ENCODE measurements at regions of chr7 and their contacts with region 1.

Region 1: GRCh38 chr7:43582503-43583423 is at the start of gene STK17A:
- DNase-seq: peak; percentile 92 to 99 (median 96)
- H3K4me3 ChIP-seq: peak within 1 kb of the TSS; percentile 73 to 97
- H3K4me3 Mint-ChIP-seq: peak within 1 kb of the TSS; percentile 93 to 99 (median 98)
- H3K27ac ChIP-seq: peak within 1 kb of the TSS; percentile 87
- H3K27ac Mint-ChIP-seq: peak within 1 kb of the TSS; percentile 93 to 100 (median 98)
- H3K4me1 ChIP-seq: peaks cover 19% of the 10 kb centered on the region
- H3K4me1 Mint-ChIP-seq: peaks cover 13 to 47% (median 18%) of the 10 kb centered on the region in 4 donors
- H3K27me3 ChIP-seq: no peaks in the 10 kb centered on the region
- H3K27me3 Mint-ChIP-seq: peaks cover 2 to 9% of the 10 kb centered on the region in 2 donors
- total RNA-seq, gene STK17A: 118 to 119 TPM

Region 2: DNA sequence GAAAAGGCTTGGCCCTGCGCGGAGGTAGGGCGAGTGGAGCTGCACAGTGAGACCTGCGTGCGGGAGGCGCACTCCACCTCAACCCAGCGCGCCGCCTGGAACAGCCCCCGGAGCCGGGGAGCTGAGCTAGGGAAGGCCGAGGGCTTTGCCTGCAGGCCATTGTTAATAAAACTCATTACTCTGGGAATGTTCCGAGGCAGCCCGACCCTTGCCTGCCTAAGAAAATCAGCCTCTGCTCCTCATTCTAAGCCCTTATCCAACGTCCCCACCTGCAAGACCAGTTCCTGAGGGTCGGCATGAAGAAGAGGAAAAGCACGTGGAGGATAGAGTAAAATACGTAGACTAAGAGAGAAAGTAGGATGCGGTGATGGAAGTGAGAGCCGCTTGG is 726.2 kb before region 1 on chr7:
- CTCF ChIA-PET with region 1: no interaction called
- POLR2A ChIA-PET with region 1: no interaction called
- intact Hi-C with region 1: no loop called
- DNase-seq: no peak
- H3K4me3 ChIP-seq: no peak overlapping the region
- H3K4me3 Mint-ChIP-seq: peak overlapping the region in 5 of 8 donors; percentile 38 to 79 (median 52)
- H3K27ac ChIP-seq: no peak overlapping the region
- H3K27ac Mint-ChIP-seq: no peak overlapping the region
- H3K4me1 ChIP-seq: no peaks in the 10 kb centered on the region
- H3K4me1 Mint-ChIP-seq: peaks cover 1 to 9% (median 6%) of the 10 kb centered on the region in 4 donors
- H3K27me3 ChIP-seq: no peaks in the 10 kb centered on the region
- H3K27me3 Mint-ChIP-seq: peaks cover 20 to 25% of the 10 kb centered on the region in 2 donors

Region 3: GRCh38 chr7:42931834-42932651 is 650.7 kb before region 1 on chr7 and contains the starts of genes MRPL32 and PSMA2:
- CTCF ChIA-PET with region 1: interaction called, 12 read pairs
- POLR2A ChIA-PET with region 1: interaction called, 5 read pairs
- intact Hi-C with region 1: loop called (anchors 2 kb)
- DNase-seq: peak; percentile 94 to 98 (median 96)
- H3K4me3 ChIP-seq: peak within 1 kb of the TSS; percentile 93 to 96
- H3K4me3 Mint-ChIP-seq: peak within 1 kb of the TSS; percentile 93 to 100 (median 99)
- H3K27ac ChIP-seq: peak within 1 kb of the TSS; percentile 94
- H3K27ac Mint-ChIP-seq: peak within 1 kb of the TSS; percentile 90 to 100 (median 99)
- H3K4me1 ChIP-seq: peaks cover 50% of the 10 kb centered on the region
- H3K4me1 Mint-ChIP-seq: peaks cover 44 to 85% (median 58%) of the 10 kb centered on the region in 4 donors
- H3K27me3 ChIP-seq: no peaks in the 10 kb centered on the region
- H3K27me3 Mint-ChIP-seq: no peaks in the 10 kb centered on the region
- total RNA-seq, gene MRPL32: 48.4 to 49.1 TPM
- total RNA-seq, gene PSMA2: 35.6 to 43.5 TPM

Region 4: GRCh38 chr7:42993038-42993437 is 589.7 kb before region 1 on chr7:
- CTCF ChIA-PET with region 1: no interaction called
- POLR2A ChIA-PET with region 1: no interaction called
- intact Hi-C with region 1: no loop called
- DNase-seq: no peak
- H3K4me3 ChIP-seq: no peak overlapping the region
- H3K4me3 Mint-ChIP-seq: no peak overlapping the region
- H3K27ac ChIP-seq: no peak overlapping the region
- H3K27ac Mint-ChIP-seq: no peak overlapping the region
- H3K4me1 ChIP-seq: no peaks in the 10 kb centered on the region
- H3K4me1 Mint-ChIP-seq: no peaks in the 10 kb centered on the region
- H3K27me3 ChIP-seq: no peaks in the 10 kb centered on the region
- H3K27me3 Mint-ChIP-seq: peaks cover 5 to 11% of the 10 kb centered on the region in 2 donors

Region 5: DNA sequence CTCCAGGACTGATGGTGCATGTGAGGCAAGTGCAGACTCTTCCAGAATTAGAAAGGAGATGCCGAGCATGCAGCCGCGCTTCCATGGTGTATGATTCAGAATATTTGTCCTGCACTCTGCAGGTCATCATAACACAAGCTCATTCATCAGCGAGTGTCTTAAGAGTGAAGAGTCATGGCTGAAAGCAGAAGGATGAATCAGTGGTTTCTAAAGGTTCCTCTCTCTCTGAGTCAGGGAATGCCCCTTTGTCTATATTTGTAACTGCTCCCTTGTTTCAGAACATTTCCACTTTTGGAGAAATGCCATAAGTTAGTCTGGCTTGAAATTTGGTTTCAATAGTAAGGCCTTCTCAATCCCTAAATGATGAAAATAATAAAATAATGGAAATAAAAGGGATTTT is 418.0 kb before region 1 on chr7:
- CTCF ChIA-PET with region 1: no interaction called
- POLR2A ChIA-PET with region 1: no interaction called
- intact Hi-C with region 1: no loop called
- DNase-seq: no peak
- H3K4me3 ChIP-seq: no peak overlapping the region
- H3K4me3 Mint-ChIP-seq: no peak overlapping the region
- H3K27ac ChIP-seq: no peak overlapping the region
- H3K27ac Mint-ChIP-seq: no peak overlapping the region
- H3K4me1 ChIP-seq: no peaks in the 10 kb centered on the region
- H3K4me1 Mint-ChIP-seq: no peaks in the 10 kb centered on the region
- H3K27me3 ChIP-seq: no peaks in the 10 kb centered on the region
- H3K27me3 Mint-ChIP-seq: peaks cover 8 to 10% of the 10 kb centered on the region in 2 donors

Region 6: GRCh38 chr7:43612599-43613589 is 30.1 kb after region 1 on chr7:
- CTCF ChIA-PET with region 1: interaction called, 22 read pairs
- POLR2A ChIA-PET with region 1: interaction called, 39 read pairs
- intact Hi-C with region 1: no loop called
- DNase-seq: no peak
- H3K4me3 ChIP-seq: no peak overlapping the region
- H3K4me3 Mint-ChIP-seq: peak overlapping the region in 7 of 8 donors; percentile 5 to 83 (median 51)
- H3K27ac ChIP-seq: peak overlapping the region; percentile 11
- H3K27ac Mint-ChIP-seq: peak overlapping the region; percentile 86 to 90 (median 87)
- H3K4me1 ChIP-seq: peaks cover 90% of the 10 kb centered on the region
- H3K4me1 Mint-ChIP-seq: peaks cover 43 to 64% (median 48%) of the 10 kb centered on the region in 4 donors
- H3K27me3 ChIP-seq: no peaks in the 10 kb centered on the region
- H3K27me3 Mint-ChIP-seq: no peaks in the 10 kb centered on the region

Region 7: GRCh38 chr7:43639858-43640491 is 57.2 kb after region 1 on chr7:
- CTCF ChIA-PET with region 1: interaction called, 199 read pairs
- POLR2A ChIA-PET with region 1: interaction called, 393 read pairs
- intact Hi-C with region 1: no loop called
- DNase-seq: no peak
- H3K4me3 ChIP-seq: no peak overlapping the region
- H3K4me3 Mint-ChIP-seq: peak overlapping the region in 3 of 8 donors; percentile 10 to 31 (median 21)
- H3K27ac ChIP-seq: no peak overlapping the region
- H3K27ac Mint-ChIP-seq: peak overlapping the region; percentile 59 to 88 (median 85)
- H3K4me1 ChIP-seq: peaks cover 99% of the 10 kb centered on the region
- H3K4me1 Mint-ChIP-seq: peaks cover 50 to 94% (median 75%) of the 10 kb centered on the region in 4 donors
- H3K27me3 ChIP-seq: no peaks in the 10 kb centered on the region
- H3K27me3 Mint-ChIP-seq: no peaks in the 10 kb centered on the region

Region 8: DNA sequence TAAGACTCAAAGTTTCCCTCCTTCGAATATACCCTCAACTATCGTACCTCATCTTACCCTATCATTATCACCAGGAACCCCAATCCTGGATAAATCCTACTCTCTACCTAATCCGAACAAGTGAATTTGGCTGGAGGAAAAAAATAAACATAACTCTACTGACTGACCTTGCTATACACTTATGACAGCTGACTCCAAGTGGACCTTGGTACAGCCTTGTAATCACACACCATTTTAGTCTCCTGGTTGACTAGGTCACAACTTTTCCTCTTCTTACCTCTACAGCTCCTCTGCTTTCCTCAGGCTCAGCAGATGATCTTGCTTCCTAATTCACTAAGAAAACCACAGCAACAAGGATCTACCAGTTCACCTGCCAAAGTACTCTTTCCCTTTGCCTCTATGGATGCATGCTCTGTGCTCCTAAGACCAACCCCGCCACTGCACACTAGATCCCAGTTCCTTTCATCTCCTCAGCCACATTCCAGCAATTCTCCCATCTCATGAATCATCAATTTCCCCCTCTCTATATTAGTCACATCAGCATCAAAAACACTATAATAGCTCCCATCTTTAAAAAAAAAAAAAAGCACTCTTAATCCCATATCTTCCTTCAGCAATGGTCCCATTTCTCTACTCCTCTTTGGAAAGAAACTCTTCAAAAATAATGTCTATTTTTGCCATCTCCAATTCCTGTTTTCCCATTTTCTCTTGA is 111.1 kb after region 1 on chr7:
- CTCF ChIA-PET with region 1: interaction called, 670 read pairs
- POLR2A ChIA-PET with region 1: interaction called, 262 read pairs
- intact Hi-C with region 1: no loop called
- DNase-seq: no peak
- H3K4me3 ChIP-seq: no peak overlapping the region
- H3K4me3 Mint-ChIP-seq: no peak overlapping the region
- H3K27ac ChIP-seq: no peak overlapping the region
- H3K27ac Mint-ChIP-seq: no peak overlapping the region
- H3K4me1 ChIP-seq: peaks cover 27% of the 10 kb centered on the region
- H3K4me1 Mint-ChIP-seq: peaks cover 27 to 42% (median 34%) of the 10 kb centered on the region in 4 donors
- H3K27me3 ChIP-seq: no peaks in the 10 kb centered on the region
- H3K27me3 Mint-ChIP-seq: no peaks in the 10 kb centered on the region

Region 9: GRCh38 chr7:43729214-43729923 is 146.6 kb after region 1 on chr7 and contains the start of gene COA1:
- CTCF ChIA-PET with region 1: interaction called, 140 read pairs
- POLR2A ChIA-PET with region 1: interaction called, 19 read pairs
- intact Hi-C with region 1: loop called (anchors 2 kb)
- DNase-seq: peak; percentile 82 to 84 (median 83)
- H3K4me3 ChIP-seq: peak within 1 kb of the TSS; percentile 97 to 99
- H3K4me3 Mint-ChIP-seq: peak within 1 kb of the TSS; percentile 93 to 95 (median 94)
- H3K27ac ChIP-seq: peak within 1 kb of the TSS; percentile 67
- H3K27ac Mint-ChIP-seq: peak within 1 kb of the TSS; percentile 84 to 95 (median 91)
- H3K4me1 ChIP-seq: peaks cover 34% of the 10 kb centered on the region
- H3K4me1 Mint-ChIP-seq: peaks cover 27 to 43% (median 35%) of the 10 kb centered on the region in 4 donors
- H3K27me3 ChIP-seq: no peaks in the 10 kb centered on the region
- H3K27me3 Mint-ChIP-seq: no peaks in the 10 kb centered on the region
- total RNA-seq, gene COA1: 52.0 to 53.2 TPM

Region 10: GRCh38 chr7:43834463-43835251 is 251.9 kb after region 1 on chr7:
- CTCF ChIA-PET with region 1: interaction called, 71 read pairs
- POLR2A ChIA-PET with region 1: interaction called, 19 read pairs
- intact Hi-C with region 1: loop called (anchors 1 kb)
- DNase-seq: peak; percentile 59 to 68 (median 64)
- H3K4me3 ChIP-seq: peak overlapping the region; percentile 45 to 58
- H3K4me3 Mint-ChIP-seq: peak overlapping the region; percentile 89 to 98 (median 96)
- H3K27ac ChIP-seq: peak overlapping the region; percentile 60
- H3K27ac Mint-ChIP-seq: peak overlapping the region; percentile 85 to 99 (median 96)
- H3K4me1 ChIP-seq: peaks cover 14% of the 10 kb centered on the region
- H3K4me1 Mint-ChIP-seq: peaks cover 16 to 25% (median 21%) of the 10 kb centered on the region in 4 donors
- H3K27me3 ChIP-seq: no peaks in the 10 kb centered on the region
- H3K27me3 Mint-ChIP-seq: no peaks in the 10 kb centered on the region

Measured in CD4-positive, alpha-beta memory T cell (primary cell).